Caco-2 (cell line): ENCODE measurements at regions of chr17 and their contacts with region 1.

Region 1: DNA sequence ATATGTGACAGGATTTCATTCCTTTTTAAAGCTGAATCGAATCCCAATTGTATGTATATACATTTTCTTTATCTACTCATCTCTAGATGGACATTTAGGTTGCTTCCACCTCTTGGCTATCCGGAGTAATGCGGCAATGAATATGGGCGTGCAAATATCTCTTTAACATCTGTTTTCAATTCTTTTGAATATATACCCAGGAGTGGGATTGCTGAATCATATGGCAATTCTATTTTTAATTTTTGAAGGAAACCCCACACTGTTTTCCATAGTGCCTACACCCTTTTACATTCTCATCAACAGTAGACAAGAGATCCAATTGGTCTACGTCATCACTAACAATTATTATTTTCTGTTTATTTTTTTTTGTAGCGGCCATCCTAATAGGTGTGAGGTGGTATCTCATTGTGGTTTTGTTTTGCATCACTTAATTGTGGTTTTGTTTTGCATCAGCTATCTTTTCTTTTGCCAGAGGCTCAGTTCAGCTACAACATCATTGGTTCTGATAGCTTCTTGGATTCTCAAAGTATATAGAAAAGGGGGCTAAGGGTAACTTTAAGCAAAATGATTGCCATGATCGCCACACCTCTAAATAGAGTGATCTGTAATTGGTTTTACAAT is 25.6 kb upstream of the MAP2K6 start:
- DNase-seq: no peak
- H3K4me3 ChIP-seq: no peak overlapping the region
- H3K4me3 Mint-ChIP-seq: no peak overlapping the region
- H3K27ac Mint-ChIP-seq: no peak overlapping the region
- H3K4me1 ChIP-seq: peaks cover 14% of the 10 kb centered on the region
- H3K4me1 Mint-ChIP-seq: peaks cover 12% of the 10 kb centered on the region
- H3K27me3 ChIP-seq: no peaks in the 10 kb centered on the region
- H3K27me3 Mint-ChIP-seq: no peaks in the 10 kb centered on the region
- CTCF ChIP-seq: no peak

Region 2: GRCh38 chr17:69335058-69335457 is 53.9 kb before region 1 on chr17:
- CTCF ChIA-PET with region 1: no interaction called
- POLR2A ChIA-PET with region 1: no interaction called
- intact Hi-C with region 1: loop called (anchors 1 kb)
- DNase-seq: peak in 1 of 2 experiments; percentile 23
- H3K4me3 ChIP-seq: no peak overlapping the region
- H3K4me3 Mint-ChIP-seq: peak overlapping the region; percentile 46
- H3K27ac Mint-ChIP-seq: no peak overlapping the region
- H3K4me1 ChIP-seq: no peaks in the 10 kb centered on the region
- H3K4me1 Mint-ChIP-seq: peaks cover 6% of the 10 kb centered on the region
- H3K27me3 ChIP-seq: no peaks in the 10 kb centered on the region
- H3K27me3 Mint-ChIP-seq: peaks cover 15% of the 10 kb centered on the region
- CTCF ChIP-seq: peak; percentile 51 to 53

Region 3: DNA sequence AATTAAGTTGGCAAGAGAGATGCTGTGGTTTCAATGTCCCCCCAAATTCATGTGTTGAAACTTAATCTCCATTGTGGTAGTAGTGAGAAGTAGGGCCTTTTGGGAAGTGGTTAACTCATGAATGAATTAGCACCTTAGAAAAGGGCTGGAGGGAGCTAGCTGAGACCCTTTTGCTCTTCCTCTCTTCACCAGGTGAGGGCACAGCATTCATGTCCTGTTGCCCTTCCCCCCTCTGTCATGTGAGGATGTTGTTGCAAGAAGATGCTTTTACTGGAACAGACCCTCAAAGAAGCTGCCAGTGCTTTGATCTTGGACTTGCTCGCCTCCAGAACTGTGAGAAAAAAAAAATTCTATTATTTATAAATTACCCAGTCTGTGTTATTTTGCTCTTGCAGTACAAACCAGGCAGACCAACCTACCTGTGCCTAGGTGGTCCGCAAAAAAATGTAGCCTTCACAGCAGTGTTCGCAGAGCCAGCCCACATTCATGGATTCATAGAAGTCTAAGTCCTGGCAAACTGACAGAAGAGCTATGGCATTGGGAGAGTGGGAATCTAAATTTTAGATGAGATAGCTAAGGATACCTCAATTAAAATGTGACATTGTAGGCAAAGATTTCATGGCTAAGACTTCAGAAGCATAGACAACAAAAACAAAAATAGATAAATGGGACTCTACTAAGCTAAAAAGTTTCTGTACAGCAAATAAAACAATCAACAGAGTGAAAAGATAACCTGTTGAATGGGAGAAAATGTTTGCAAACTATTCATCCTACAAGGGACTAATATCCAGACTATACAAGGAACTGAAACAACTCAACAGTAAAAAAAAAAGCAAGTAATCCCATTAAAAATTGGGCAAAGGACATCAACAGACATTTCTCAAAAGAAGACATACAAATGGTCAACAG is 30.0 kb before region 1 on chr17:
- CTCF ChIA-PET with region 1: no interaction called
- POLR2A ChIA-PET with region 1: no interaction called
- intact Hi-C with region 1: loop called (anchors 1 kb)
- DNase-seq: peak; percentile 38 to 62
- H3K4me3 ChIP-seq: no peak overlapping the region
- H3K4me3 Mint-ChIP-seq: no peak overlapping the region
- H3K27ac Mint-ChIP-seq: no peak overlapping the region
- H3K4me1 ChIP-seq: no peaks in the 10 kb centered on the region
- H3K4me1 Mint-ChIP-seq: no peaks in the 10 kb centered on the region
- H3K27me3 ChIP-seq: no peaks in the 10 kb centered on the region
- H3K27me3 Mint-ChIP-seq: no peaks in the 10 kb centered on the region
- CTCF ChIP-seq: peak; percentile 56 to 82

Region 4: DNA sequence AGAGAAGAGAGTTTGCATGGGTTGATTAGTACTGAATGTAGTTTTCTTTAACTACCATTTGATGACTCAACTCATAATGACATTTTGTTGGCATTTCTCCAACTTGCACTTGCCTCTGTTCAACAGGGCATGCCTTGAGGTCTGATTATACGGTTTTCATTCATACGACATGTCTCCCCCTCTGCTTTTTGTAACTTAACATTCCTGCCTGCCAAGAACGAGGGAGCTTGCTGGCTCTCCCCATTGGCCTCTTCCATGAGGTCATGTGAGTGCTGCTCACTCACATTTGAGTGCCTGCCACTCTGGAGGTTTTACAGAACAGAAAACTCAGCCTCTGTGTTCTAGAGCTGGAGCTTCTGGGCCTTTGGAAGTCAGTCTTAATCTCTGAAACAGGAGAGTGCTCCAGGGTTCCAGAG is 45.2 kb after region 1 on chr17:
- CTCF ChIA-PET with region 1: no interaction called
- POLR2A ChIA-PET with region 1: no interaction called
- intact Hi-C with region 1: no loop called
- DNase-seq: no peak
- H3K4me3 ChIP-seq: no peak overlapping the region
- H3K4me3 Mint-ChIP-seq: no peak overlapping the region
- H3K27ac Mint-ChIP-seq: no peak overlapping the region
- H3K4me1 ChIP-seq: no peaks in the 10 kb centered on the region
- H3K4me1 Mint-ChIP-seq: peaks cover 10% of the 10 kb centered on the region
- H3K27me3 ChIP-seq: no peaks in the 10 kb centered on the region
- H3K27me3 Mint-ChIP-seq: no peaks in the 10 kb centered on the region
- CTCF ChIP-seq: no peak

Region 5: GRCh38 chr17:69501591-69502468 is 112.9 kb after region 1 on chr17:
- CTCF ChIA-PET with region 1: no interaction called
- POLR2A ChIA-PET with region 1: interaction called, 10 read pairs
- intact Hi-C with region 1: no loop called
- DNase-seq: peak; percentile 62
- H3K4me3 ChIP-seq: peak overlapping the region; percentile 26
- H3K4me3 Mint-ChIP-seq: peak overlapping the region; percentile 52
- H3K27ac Mint-ChIP-seq: peak overlapping the region; percentile 17
- H3K4me1 ChIP-seq: peaks cover 4% of the 10 kb centered on the region; the same call in 1 of the 2 replicates
- H3K4me1 Mint-ChIP-seq: peaks cover 21% of the 10 kb centered on the region
- H3K27me3 ChIP-seq: no peaks in the 10 kb centered on the region
- H3K27me3 Mint-ChIP-seq: no peaks in the 10 kb centered on the region
- CTCF ChIP-seq: no peak